Cardiac septum (tissue), 1 donor: ENCODE measurements at regions of chr10 and their contacts with region 1.

Region 1: GRCh38 chr10:50224330-50224952 is 26.9 kb downstream of the ASAH2 start:
- DNase-seq: no peak

Region 2: GRCh38 chr10:49592726-49593563 is 631.5 kb before region 1 on chr10:
- intact Hi-C with region 1: loop called (anchors 10 kb)
- DNase-seq: peak; percentile 76